Motor neuron (in vitro differentiated cells): ENCODE measurements at regions of chr7 and their contacts with region 1.

Region 1: DNA sequence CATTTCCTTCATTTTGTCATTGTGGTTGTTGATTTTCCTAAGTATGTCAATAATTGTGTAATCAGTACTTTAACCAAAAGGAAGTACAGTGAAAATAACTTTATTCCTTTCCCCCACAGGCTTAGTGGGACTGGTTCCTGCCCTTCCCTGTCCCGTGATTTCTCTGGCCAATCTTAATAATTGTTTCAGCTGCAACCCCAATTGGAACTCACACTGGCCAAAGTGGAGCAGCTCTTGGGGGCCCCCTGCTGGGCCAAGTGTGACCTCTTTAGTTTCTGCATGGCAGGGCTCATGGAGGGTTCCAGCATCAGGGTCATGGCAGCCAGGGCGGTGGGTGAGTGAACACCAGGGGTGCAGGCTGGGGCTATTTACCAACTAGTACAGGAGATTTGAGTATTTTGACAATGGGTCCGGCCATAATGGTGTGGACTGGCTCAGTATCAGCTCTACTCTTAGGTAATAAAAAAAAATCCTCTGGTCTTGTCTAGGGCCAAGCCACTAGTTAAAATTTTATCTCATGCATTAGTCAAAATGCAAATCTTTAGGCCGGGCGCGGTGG is 31.7 kb downstream of the CYCS start:
- ATAC-seq: peak in 6 of 8 experiments; percentile 25 to 87 (median 68)
- H3K4me3 ChIP-seq: no peak overlapping the region
- H3K27ac ChIP-seq: no peak overlapping the region
- H3K4me1 ChIP-seq: peaks cover 16 to 21% of the 10 kb centered on the region in 2 donors

Region 2: GRCh38 chr7:23863209-23863798 is 1230.0 kb before region 1 on chr7:
- in situ Hi-C with region 1: loop called in 1 of 9 experiments (anchors 25 kb)
- ATAC-seq: peak in 4 of 8 experiments; percentile 38 to 67 (median 52)
- H3K4me3 ChIP-seq: no peak overlapping the region
- H3K27ac ChIP-seq: no peak overlapping the region
- H3K4me1 ChIP-seq: no peaks in the 10 kb centered on the region

Region 3: DNA sequence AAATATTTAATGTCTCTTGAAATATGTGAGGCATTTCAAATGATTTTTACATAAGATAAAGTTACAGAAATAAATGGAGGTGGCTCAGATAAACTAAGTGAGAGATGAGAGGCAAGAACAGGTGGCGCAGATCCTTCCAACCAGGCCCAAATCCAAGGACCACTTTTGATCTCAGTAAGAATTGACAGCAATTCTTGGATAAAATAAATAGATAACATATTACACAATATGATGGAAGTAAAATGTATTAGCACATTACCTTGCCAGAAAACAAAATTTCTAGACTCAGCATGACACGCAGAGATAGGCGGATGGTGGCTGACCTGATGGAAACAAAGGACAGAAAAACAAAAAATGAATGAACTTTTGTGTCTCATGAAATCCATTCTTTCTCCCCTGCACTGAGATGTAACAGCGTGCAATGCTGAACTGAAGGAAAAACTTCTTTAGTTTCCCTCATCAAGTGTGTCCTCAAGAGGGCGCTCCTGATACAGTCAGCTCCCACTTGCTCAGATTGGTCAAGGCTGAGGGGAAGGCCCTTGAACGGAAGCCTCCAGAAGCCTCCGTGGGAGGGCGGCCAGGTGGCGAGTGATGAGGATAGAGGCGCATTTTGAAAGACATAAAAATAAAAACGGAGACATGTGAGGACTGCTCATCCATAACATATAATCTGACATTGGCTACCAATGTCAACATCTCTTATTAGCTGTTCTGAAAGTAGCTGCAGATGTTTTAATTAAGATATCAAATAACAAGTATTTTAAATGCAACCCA is 273.2 kb before region 1 on chr7:
- in situ Hi-C with region 1: loop called in 7 of 9 experiments (anchors 25 kb)
- ATAC-seq: peak; percentile 37 to 82 (median 78)
- H3K4me3 ChIP-seq: no peak overlapping the region
- H3K27ac ChIP-seq: no peak overlapping the region
- H3K4me1 ChIP-seq: peaks cover 11 to 12% of the 10 kb centered on the region in 2 donors

Region 4: GRCh38 chr7:24979863-24980533 is 113.3 kb before region 1 on chr7 and contains the start of gene OSBPL3:
- in situ Hi-C with region 1: loop called in 1 of 9 experiments (anchors 25 kb)
- ATAC-seq: peak; percentile 57 to 88 (median 80)
- H3K4me3 ChIP-seq: peak within 1 kb of the TSS; percentile 49 to 85 (median 56)
- H3K27ac ChIP-seq: peak within 1 kb of the TSS; percentile 16 to 35
- H3K4me1 ChIP-seq: peaks cover 0 to 7% of the 10 kb centered on the region in 2 donors
- total RNA-seq, gene OSBPL3: 1.8 to 139 (median 7.5) TPM